ENCODE measurements at regions of chr17 and their contacts with region 1.

Region 1: GRCh38 chr17:74759243-74759801 is 10.9 kb downstream of the NHERF1 start:
- DNase-seq: peak in 28 of 35 experiments; percentile 35 to 79 (median 54)
- ATAC-seq: peak; percentile 88 to 92 (median 91)
- H3K4me3 ChIP-seq: peak overlapping the region; percentile 39 to 58
- H3K4me3 Mint-ChIP-seq: peak overlapping the region; percentile 66 to 100 (median 68)
- H3K27ac ChIP-seq: peak overlapping the region; percentile 62
- H3K27ac Mint-ChIP-seq: peak overlapping the region; percentile 92 to 94
- H3K4me1 ChIP-seq: peaks cover 43 to 98% of the 10 kb centered on the region in 2 experiments
- H3K4me1 Mint-ChIP-seq: peaks cover 58 to 81% (median 77%) of the 10 kb centered on the region in 3 donors
- H3K27me3 ChIP-seq: no peaks in the 10 kb centered on the region
- H3K27me3 Mint-ChIP-seq: no peaks in the 10 kb centered on the region

Region 2: DNA sequence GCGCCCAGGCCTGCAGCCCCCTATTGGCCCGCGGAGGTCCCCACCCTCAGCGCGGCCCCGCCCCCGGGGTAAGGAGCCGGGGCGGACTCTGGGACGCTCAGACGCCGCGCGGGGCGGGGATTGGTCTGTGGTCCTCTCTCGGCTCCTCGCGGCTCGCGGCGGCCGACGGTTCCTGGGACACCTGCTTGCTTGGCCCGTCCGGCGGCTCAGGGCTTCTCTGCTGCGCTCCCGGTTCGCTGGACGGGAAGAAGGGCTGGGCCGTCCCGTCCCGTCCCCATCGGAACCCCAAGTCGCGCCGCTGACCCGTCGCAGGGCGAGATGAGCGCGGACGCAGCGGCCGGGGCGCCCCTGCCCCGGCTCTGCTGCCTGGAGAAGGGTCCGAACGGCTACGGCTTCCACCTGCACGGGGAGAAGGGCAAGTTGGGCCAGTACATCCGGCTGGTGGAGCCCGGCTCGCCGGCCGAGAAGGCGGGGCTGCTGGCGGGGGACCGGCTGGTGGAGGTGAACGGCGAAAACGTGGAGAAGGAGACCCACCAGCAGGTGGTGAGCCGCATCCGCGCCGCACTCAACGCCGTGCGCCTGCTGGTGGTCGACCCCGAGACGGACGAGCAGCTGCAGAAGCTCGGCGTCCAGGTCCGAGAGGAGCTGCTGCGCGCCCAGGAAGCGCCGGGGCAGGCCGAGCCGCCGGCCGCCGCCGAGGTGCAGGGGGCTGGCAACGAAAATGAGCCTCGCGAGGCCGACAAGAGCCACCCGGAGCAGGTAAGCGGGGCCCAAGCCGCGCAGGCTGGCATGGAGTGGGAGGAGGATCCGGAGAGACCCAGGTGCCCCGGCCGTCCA is 10.6 kb before region 1 on chr17 and contains the start of gene NHERF1:
- CTCF ChIA-PET with region 1: interaction called, 12 to 25 read pairs
- POLR2A ChIA-PET with region 1: no interaction called
- DNase-seq: peak in 33 of 35 experiments; percentile 39 to 97 (median 86)
- ATAC-seq: peak; percentile 85 to 88 (median 88)
- H3K4me3 ChIP-seq: peak within 1 kb of the TSS; percentile 92
- H3K4me3 Mint-ChIP-seq: peak within 1 kb of the TSS; percentile 92 to 100 (median 98)
- H3K27ac ChIP-seq: peak within 1 kb of the TSS; percentile 43
- H3K27ac Mint-ChIP-seq: peak within 1 kb of the TSS; percentile 93 to 97
- H3K4me1 ChIP-seq: peaks cover 41 to 80% of the 10 kb centered on the region in 2 experiments
- H3K4me1 Mint-ChIP-seq: peaks cover 67 to 74% (median 69%) of the 10 kb centered on the region in 3 donors
- H3K27me3 ChIP-seq: no peaks in the 10 kb centered on the region
- H3K27me3 Mint-ChIP-seq: no peaks in the 10 kb centered on the region
- total RNA-seq, gene NHERF1: 104 to 260 (median 223) TPM